ENCODE measurements at regions of chr2 and their contacts with region 1.

Region 1: GRCh38 chr2:37246205-37246604 is 14.7 kb downstream of the NDUFAF7 start:
- DNase-seq: no peak
- H3K4me3 ChIP-seq: no peak overlapping the region
- H3K27ac ChIP-seq: no peak overlapping the region
- H3K4me1 ChIP-seq: no peaks in the 10 kb centered on the region
- H3K27me3 ChIP-seq: no peaks in the 10 kb centered on the region
- CTCF ChIP-seq: no peak

Region 2: DNA sequence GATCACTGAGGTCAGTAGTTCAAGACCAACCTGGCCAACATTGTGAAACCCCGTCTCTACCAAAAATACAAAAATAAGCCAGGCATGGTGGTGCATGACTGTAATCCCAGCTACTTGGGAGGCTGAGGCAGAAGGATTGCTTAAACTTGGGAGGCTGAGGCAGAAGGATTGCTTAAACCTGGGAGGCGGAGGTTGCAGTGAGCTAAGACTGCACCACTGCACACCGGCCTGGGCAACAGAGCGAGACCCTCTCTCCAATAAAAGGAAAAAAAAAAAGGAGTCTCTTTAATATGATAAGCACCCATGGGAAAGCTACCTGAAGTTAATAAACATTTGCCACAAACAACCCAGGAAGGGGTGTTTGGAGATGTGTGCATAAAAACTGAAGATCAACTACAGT is 282.5 kb before region 1 on chr2:
- CTCF ChIA-PET with region 1: no interaction called
- POLR2A ChIA-PET with region 1: interaction called, 20 read pairs
- intact Hi-C with region 1: no loop called
- DNase-seq: no peak
- H3K4me3 ChIP-seq: no peak overlapping the region
- H3K27ac ChIP-seq: no peak overlapping the region
- H3K4me1 ChIP-seq: peaks cover 29% of the 10 kb centered on the region
- H3K27me3 ChIP-seq: no peaks in the 10 kb centered on the region
- CTCF ChIP-seq: no peak

Region 3: GRCh38 chr2:37283207-37283606 is 37.0 kb after region 1 on chr2:
- CTCF ChIA-PET with region 1: no interaction called
- POLR2A ChIA-PET with region 1: no interaction called
- intact Hi-C with region 1: loop called (anchors 1 kb)
- DNase-seq: no peak
- H3K4me3 ChIP-seq: no peak overlapping the region
- H3K27ac ChIP-seq: peak overlapping the region; percentile 26
- H3K4me1 ChIP-seq: peaks cover 4% of the 10 kb centered on the region
- H3K27me3 ChIP-seq: no peaks in the 10 kb centered on the region
- CTCF ChIP-seq: no peak

Measured in A673 (cell line).